ENCODE measurements at regions of chr9 and their contacts with region 1.

Region 1: DNA sequence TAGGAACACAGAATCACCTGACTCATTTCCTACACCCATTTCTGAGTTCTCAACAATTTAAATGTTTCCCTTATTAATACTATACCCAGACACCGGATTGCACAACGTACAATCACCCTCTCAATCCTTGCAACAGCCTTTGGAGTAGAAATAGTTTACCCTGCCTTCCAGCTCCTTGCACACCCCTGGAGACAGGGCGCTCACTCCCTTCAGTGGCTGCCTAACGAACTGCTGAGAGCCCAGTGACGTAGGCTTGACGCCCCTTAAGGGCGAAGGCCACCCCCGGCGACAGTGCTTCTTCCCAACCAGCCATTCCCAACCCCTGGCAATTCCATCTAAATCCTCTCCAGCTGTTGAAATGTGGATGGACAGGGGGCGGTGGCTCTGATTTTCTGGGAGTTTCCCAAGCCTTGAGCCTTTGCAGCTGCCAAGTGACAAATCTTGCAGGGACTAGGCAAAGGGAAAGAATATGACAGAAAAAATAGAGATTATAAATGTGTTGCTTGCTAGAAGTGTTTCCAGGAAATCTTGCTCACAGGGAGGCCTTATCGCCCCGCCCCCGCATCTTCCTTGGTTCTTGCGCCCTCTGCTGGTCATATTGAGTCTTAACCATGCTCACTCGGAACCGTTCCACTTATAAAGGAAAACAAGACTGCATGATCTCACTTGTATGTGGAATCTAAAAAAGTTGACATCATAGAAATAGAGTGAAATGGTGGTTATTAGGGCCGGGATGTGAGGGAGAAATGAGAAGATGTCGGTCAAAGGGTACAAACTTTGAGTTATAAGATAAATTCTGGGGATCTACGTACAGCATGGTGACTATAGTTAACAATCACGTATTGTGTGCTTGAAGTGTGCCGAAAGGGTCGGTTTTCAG is 7.6 kb upstream of the BARX1 start:
- DNase-seq: peak; percentile 26
- H3K4me3 ChIP-seq: no peak overlapping the region
- CTCF ChIP-seq: peak; percentile 78

Region 2: GRCh38 chr9:93682232-93682968 is 280.4 kb before region 1 on chr9:
- CTCF ChIA-PET with region 1: interaction called, 142 read pairs
- POLR2A ChIA-PET with region 1: no interaction called
- DNase-seq: no peak
- H3K4me3 ChIP-seq: no peak overlapping the region
- CTCF ChIP-seq: peak; percentile 81

Region 3: GRCh38 chr9:93950619-93951601 is 11.9 kb before region 1 on chr9:
- CTCF ChIA-PET with region 1: interaction called, 18 read pairs
- POLR2A ChIA-PET with region 1: no interaction called
- DNase-seq: no peak
- H3K4me3 ChIP-seq: peak overlapping the region; percentile 54
- CTCF ChIP-seq: no peak

Region 4: GRCh38 chr9:93978551-93978950 is 15.8 kb after region 1 on chr9:
- CTCF ChIA-PET with region 1: interaction called, 11 read pairs
- POLR2A ChIA-PET with region 1: no interaction called
- DNase-seq: no peak
- H3K4me3 ChIP-seq: no peak overlapping the region
- CTCF ChIP-seq: no peak

Measured in AG04449 (cell line).